HEK293 (cell line): ENCODE measurements at regions of chr4 and their contacts with region 1.

Region 1: DNA sequence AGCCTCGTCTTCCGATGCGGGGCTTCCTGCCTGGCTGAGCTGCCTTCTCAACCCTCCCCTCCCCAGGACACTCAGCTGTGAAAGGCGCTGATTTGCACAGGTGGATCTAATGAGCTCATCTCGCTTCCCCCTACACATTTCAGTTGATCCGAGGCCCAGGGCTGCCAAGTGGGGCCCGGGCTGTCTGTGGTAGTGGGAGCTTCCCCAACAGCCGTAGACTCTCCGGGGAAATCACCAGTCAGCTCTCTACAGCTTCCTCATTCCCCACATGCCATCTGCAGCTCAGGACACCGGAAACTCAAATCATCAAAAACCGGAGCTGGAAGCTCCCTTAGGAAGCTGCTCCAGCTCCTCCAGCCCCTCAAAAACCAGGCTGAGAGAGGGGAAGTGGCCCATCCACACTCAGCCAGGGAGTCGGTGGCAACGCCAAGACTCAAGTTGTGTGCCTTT is 56.2 kb downstream of the SMIM20 start:
- H3K4me3 ChIP-seq: no peak overlapping the region
- H3K27ac ChIP-seq: no peak overlapping the region
- H3K4me1 ChIP-seq: no peaks in the 10 kb centered on the region
- CTCF ChIP-seq: no peak

Region 2: GRCh38 chr4:25650311-25650710 is 319.9 kb before region 1 on chr4:
- CTCF ChIA-PET with region 1: no interaction called
- POLR2A ChIA-PET with region 1: no interaction called
- H3K4me3 ChIP-seq: no peak overlapping the region
- H3K27ac ChIP-seq: no peak overlapping the region
- H3K4me1 ChIP-seq: no peaks in the 10 kb centered on the region
- CTCF ChIP-seq: no peak

Region 3: DNA sequence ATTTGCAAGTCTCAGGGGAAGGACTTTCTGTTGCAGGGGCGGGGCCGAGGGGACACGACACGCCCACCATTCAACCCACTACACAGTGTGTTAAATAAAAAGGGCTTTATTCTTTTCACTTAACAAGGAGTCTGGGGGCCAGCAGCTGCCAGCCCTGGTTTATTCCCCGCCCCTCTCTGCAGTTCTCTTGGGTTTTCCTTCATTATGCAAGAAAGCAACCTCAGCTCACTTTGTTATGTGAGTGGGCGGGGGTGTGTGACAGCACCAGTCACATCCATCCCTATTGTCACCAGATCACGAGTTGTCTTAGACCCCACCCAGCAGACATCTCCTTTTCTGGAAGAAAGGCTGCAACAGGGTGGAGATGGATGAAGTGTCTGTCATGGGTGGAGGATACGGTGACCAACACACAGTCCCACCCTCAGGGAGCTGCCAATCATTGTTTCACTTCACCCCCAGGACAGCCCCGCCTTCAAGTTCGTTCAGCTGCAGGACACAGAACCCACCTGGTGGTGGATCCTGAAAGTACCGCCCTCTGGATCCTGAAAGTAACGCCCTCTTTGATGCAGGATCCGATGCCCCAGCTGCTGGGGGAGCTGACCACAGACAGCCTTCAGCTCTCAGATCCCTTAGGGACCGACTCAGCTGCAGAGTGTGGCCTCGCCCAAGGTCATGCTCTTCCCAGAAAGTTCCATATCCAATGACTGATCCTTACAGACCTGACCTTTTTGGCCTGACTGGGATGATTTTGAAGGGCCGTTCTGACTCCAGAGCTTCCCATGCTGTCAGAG is 23.3 kb after region 1 on chr4:
- CTCF ChIA-PET with region 1: interaction called, 12 read pairs
- POLR2A ChIA-PET with region 1: no interaction called
- H3K4me3 ChIP-seq: no peak overlapping the region
- H3K27ac ChIP-seq: no peak overlapping the region
- H3K4me1 ChIP-seq: no peaks in the 10 kb centered on the region
- CTCF ChIP-seq: no peak